Activated T-helper 2 cell treated with anti-CD3 and anti-CD28 coated beads, Interferon-gamma antibody, Interleukin-2, Interleukin-4, amounts not matched to agents 10 μg/mL and 5 μg/mL and 100 μg/mL, durations not matched to agents 14 hours and 24 hours and 36 hours (primary cell): ENCODE measurements at regions of chr22 and their contacts with region 1.

Region 1: GRCh38 chr22:17638432-17639246 is at the start of gene BCL2L13:
- DNase-seq: peak; percentile 86
- H3K4me3 Mint-ChIP-seq: peak within 1 kb of the TSS; percentile 87
- H3K27ac Mint-ChIP-seq: peak within 1 kb of the TSS; percentile 89
- H3K4me1 Mint-ChIP-seq: peaks cover 17% of the 10 kb centered on the region
- H3K27me3 Mint-ChIP-seq: no peaks in the 10 kb centered on the region
- total RNA-seq, gene BCL2L13: 32.6 and 33.7 TPM in 2 replicates

Region 2: GRCh38 chr22:17536269-17536668 is 102.4 kb before region 1 on chr22:
- intact Hi-C with region 1: no loop called
- DNase-seq: no peak
- H3K4me3 Mint-ChIP-seq: no peak overlapping the region
- H3K27ac Mint-ChIP-seq: no peak overlapping the region
- H3K4me1 Mint-ChIP-seq: no peaks in the 10 kb centered on the region
- H3K27me3 Mint-ChIP-seq: peaks cover 4% of the 10 kb centered on the region

Region 3: DNA sequence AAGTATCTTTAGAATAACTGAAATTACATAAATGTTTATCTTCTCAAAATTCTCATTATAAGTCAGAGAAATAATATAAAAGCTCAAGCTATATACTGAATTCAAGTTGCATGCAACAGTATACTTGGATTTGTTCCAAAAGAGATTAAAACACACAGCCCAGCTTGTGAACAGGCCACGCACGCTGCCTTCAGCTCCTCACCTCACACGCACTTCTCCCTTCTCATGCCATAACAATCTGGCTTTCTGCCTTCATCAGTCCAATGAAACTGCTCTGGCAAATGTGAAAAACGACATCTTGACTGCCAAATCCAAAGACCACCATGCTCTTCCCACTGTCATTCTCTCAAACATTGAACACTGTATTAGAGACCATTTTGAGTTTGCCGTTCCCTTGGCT is 32.1 kb before region 1 on chr22:
- intact Hi-C with region 1: no loop called
- DNase-seq: no peak
- H3K4me3 Mint-ChIP-seq: no peak overlapping the region
- H3K27ac Mint-ChIP-seq: no peak overlapping the region
- H3K4me1 Mint-ChIP-seq: peaks cover 4% of the 10 kb centered on the region
- H3K27me3 Mint-ChIP-seq: no peaks in the 10 kb centered on the region

Region 4: DNA sequence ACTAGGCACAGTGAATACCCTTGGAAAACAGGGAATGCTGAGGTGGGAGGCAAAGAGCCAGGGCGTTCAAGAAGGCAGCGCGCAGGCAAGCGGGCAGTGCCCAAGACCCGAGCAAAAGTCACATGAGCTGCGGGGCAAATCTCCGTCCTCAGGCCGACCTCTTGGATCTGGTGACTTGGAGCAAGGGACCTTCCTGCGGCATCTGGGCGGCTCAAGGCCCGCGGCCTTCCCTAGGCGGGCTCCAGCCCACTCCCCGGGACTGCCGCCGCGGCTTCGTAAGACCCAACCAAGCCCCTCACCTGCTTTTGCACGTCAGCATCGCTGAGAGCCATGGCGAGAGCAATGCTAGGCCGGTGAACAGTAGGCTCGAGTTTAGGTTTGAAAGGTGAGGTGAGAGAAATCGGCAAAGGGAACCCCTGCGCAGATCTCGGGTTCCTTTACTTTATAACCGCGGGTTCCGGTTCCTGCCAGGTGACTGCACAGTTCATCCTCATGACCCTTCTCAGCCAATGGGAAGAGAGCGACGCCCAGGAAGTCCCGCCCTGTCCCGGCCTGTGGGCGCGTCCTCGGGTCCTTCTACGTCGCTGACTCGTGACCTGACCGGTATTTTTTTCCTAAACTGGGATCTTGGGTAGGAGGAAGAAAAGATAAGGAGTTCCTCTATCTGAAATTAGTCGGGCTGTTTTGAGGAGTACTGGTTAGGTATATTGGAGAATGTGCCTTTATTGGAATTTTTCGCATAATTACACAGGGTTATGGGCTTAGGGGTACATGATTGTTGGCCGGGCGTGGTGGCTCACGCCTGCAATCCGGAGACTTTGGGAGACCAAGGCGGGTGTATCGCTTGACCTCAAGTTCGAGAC is 10.1 kb before region 1 on chr22 and contains the start of gene ATP6V1E1:
- intact Hi-C with region 1: loop called (anchors 1 kb)
- DNase-seq: peak; percentile 93
- H3K4me3 Mint-ChIP-seq: peak within 1 kb of the TSS; percentile 96
- H3K27ac Mint-ChIP-seq: peak within 1 kb of the TSS; percentile 89
- H3K4me1 Mint-ChIP-seq: peaks cover 8% of the 10 kb centered on the region
- H3K27me3 Mint-ChIP-seq: no peaks in the 10 kb centered on the region
- total RNA-seq, gene ATP6V1E1: 107 and 113 TPM in 2 replicates

Region 5: DNA sequence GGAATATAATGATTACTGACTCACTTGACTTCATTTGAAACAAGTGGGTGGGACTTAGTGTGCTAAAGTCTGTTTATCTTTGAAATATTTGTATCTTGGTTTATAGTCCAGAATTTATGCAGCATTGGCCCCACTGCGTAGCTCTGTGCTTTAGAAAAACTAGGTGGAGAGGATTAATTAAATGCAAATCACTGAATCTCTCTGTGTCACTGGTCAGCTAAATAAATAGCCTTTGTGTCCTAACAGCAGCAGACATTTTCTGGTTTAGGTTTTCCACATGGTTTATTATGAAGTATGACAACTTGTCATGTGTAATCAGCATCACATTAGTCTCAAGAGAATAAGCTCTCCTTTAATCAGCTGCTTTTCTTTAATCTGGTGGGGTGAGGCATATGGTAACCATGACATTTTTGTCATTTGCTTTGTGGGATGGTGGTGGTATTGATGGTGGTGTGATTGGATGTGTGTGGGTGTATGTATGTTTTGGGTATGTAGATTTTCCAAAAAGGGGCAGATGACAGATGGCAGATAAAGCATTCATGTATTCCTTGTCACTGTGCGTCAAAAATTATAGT is 33.9 kb after region 1 on chr22:
- intact Hi-C with region 1: loop called (anchors 5 kb)
- DNase-seq: no peak
- H3K4me3 Mint-ChIP-seq: no peak overlapping the region
- H3K27ac Mint-ChIP-seq: peak overlapping the region; percentile 72
- H3K4me1 Mint-ChIP-seq: peaks cover 19% of the 10 kb centered on the region
- H3K27me3 Mint-ChIP-seq: no peaks in the 10 kb centered on the region

Region 6: DNA sequence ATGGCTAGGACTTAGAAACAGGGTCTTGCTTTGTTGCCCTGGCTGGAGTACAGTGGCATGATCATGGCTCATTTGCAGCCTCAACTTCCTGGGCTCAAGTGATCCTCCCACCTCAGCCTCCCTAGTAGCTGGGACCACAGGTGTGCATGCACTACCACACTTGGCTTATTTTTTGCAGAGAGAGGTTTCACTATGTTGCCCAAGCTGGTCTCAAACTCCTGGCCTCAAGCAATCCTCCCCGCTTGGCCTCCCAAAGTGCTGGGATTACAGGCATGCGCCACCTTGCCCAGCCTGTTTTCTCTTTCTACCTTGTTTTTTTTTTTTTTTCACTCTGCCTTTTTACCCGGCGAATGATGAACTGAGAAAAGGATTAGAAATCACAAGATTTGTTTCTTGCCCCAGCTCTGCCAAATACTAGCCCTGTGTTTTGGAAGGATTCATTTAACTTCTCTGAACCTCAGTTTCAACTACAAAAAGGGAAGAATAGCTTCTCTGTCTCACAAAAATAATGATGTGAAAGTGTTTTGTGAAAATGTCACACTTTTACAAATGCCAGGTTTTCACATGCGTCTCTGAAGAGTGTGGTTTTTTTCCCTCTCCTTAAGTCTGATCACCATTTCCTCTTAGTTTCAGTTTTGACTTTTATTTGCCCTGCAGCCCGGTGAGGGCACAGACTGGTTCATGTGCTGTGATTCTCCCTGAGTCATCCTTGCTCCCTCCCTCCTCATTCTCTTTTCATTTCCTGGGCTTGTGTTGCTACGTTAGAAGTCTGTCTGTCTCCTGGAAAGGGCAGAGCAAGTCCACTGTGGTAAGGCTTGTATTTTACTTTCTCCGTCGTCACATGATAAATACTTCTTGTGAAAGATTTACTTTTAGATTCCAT is 67.6 kb after region 1 on chr22:
- intact Hi-C with region 1: loop called (anchors 2 kb)
- DNase-seq: peak; percentile 21
- H3K4me3 Mint-ChIP-seq: peak overlapping the region; percentile 61
- H3K27ac Mint-ChIP-seq: peak overlapping the region; percentile 89
- H3K4me1 Mint-ChIP-seq: peaks cover 17% of the 10 kb centered on the region
- H3K27me3 Mint-ChIP-seq: no peaks in the 10 kb centered on the region

Region 7: DNA sequence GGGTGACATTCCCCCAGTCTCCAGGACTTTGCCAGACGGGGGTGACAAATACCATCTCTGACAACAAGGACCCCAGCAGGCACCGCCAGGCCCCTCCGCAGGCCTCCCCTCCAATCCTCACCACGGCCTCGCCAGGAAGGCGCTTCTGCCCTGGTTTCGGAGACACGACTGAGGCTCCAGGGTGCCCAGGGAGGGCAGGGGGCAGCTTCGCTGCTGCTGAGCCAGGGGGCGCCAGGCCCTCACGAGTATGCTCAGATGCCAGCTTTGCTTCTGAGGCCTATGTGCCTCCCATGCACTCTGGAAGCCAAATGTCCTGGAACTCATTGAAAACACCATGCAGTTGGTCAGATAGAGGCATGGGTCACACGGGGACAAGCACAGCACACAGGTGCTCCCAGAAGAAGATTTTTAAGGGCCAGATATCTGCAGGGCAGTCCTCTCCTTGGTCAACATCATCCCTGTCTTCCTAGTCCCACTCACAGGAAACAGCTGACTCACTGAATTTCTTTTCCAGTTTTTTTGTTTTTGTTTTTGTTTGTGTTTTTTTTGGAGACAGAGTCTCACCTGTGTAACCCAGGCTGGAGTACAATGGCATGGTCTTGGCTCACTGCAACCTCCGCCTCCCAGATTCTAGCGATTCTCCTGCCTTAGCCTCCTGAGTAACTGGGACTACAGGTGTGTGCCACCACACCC is 115.7 kb after region 1 on chr22:
- intact Hi-C with region 1: no loop called
- DNase-seq: no peak
- H3K4me3 Mint-ChIP-seq: no peak overlapping the region
- H3K27ac Mint-ChIP-seq: no peak overlapping the region
- H3K4me1 Mint-ChIP-seq: no peaks in the 10 kb centered on the region
- H3K27me3 Mint-ChIP-seq: peaks cover 6% of the 10 kb centered on the region

Region 8: DNA sequence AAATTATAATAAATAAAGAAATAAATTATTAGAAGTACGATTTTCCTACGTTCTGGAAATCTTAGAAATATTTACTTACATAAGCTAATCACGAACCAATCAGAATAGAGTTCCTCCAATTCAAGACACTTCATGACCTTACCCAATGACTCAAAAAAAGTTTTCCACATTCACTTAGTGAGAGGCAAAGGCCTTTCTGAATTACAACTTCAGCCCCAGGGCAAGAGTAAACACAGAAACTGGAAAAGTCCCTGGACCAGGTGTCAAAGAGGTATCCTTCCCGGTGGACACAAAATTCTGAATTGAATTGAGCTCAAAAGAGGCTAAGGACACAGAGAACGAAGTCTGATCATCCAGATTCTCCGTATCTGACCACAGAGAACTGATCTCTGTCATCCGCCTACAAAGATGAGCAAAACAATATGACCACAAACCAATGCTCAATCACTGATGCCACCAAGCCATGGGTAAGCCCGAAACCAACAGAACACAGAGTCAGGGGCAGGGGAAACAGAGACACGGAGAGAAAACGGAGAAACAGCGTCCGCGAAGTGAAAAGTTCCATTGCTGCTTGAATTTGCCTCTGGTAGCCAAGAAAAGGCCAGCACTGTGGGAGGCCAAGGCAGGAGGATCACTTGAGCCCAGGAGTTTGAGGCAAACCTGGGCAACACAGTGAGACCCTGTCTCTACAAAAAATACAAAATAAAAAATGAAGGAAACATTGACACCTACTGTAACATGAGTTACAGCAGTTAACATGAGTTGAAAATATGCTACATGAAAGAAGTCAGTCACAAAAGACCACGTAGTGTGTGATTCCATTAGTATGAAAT is 128.8 kb after region 1 on chr22:
- intact Hi-C with region 1: loop called (anchors 2 kb)
- DNase-seq: peak; percentile 52
- H3K4me3 Mint-ChIP-seq: peak overlapping the region; percentile 2
- H3K27ac Mint-ChIP-seq: peak overlapping the region; percentile 43
- H3K4me1 Mint-ChIP-seq: peaks cover 19% of the 10 kb centered on the region
- H3K27me3 Mint-ChIP-seq: peaks cover 51% of the 10 kb centered on the region